Thyroid gland (tissue), 4 donors: ENCODE measurements at regions of chr1 and their contacts with region 1.

Region 1: GRCh38 chr1:11893907-11894251 is 32.3 kb downstream of the KIAA2013 start:
- DNase-seq: peak; percentile 61 to 77
- H3K4me3 ChIP-seq: no peak overlapping the region
- H3K27ac ChIP-seq: no peak overlapping the region
- H3K4me1 ChIP-seq: no peaks in the 10 kb centered on the region
- H3K27me3 ChIP-seq: peaks cover 9% of the 10 kb centered on the region
- CTCF ChIP-seq: peak; percentile 73 to 93 (median 85)
- POLR2A ChIP-seq: no peak

Region 2: DNA sequence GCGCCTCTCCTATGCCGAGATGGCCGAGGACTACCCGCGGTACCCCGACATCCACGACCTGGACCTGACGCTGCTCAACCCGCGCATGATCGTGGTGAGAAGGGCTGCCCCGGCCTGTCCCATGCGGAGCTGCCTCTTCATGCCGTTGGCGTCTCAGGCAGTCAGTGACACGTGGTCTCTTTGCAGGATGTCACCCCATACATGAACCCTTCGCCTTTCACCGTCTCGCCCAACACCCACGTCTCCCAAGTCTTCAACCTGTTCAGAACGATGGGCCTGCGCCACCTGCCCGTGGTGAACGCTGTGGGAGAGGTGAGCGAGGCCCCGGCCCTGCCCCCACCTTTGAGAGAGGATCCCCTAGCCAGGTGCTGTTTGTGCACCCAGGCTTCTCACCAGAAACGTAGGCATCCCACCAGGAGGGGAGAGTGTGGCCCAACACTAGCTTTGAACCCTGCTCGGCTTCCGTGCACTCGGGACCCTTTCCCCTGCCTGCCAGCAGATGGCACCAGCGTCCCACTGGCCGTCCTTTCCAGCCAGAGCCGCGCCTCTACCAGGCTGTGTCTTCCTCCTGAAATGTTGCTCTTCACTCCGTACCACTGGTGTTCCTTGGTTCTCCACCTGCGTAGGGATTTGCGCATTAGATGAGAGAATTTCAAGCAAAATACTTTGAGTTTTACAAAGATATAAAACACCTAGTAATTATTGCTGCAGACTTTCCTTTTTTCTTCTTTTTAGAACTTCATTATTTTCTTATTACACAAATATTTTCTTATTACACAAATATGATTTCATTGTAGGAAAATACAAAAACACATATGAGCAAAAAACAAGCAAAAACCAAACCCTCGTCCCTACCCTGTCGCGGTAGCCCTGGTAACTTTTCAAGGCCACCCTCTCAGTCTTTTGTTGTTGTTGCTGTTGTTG is 55.3 kb before region 1 on chr1:
- intact Hi-C with region 1: loop called (anchors 5 kb)
- DNase-seq: peak; percentile 58 to 71
- H3K4me3 ChIP-seq: no peak overlapping the region
- H3K27ac ChIP-seq: no peak overlapping the region
- H3K4me1 ChIP-seq: no peaks in the 10 kb centered on the region
- H3K27me3 ChIP-seq: no peaks in the 10 kb centered on the region
- CTCF ChIP-seq: peak; percentile 89 to 98 (median 96)
- POLR2A ChIP-seq: no peak

Region 3: GRCh38 chr1:12019858-12020509 is 126.1 kb after region 1 on chr1:
- intact Hi-C with region 1: no loop called
- DNase-seq: no peak
- H3K4me3 ChIP-seq: peak overlapping the region; percentile 42 to 84 (median 60)
- H3K27ac ChIP-seq: peak overlapping the region in 2 of 3 donors; percentile 76 to 81
- H3K4me1 ChIP-seq: peaks cover 0 to 15% of the 10 kb centered on the region in 2 donors
- H3K27me3 ChIP-seq: no peaks in the 10 kb centered on the region
- CTCF ChIP-seq: no peak
- POLR2A ChIP-seq: no peak